Natural killer cell (primary cell): ENCODE measurements at regions of chr3 and their contacts with region 1.

Region 1: DNA sequence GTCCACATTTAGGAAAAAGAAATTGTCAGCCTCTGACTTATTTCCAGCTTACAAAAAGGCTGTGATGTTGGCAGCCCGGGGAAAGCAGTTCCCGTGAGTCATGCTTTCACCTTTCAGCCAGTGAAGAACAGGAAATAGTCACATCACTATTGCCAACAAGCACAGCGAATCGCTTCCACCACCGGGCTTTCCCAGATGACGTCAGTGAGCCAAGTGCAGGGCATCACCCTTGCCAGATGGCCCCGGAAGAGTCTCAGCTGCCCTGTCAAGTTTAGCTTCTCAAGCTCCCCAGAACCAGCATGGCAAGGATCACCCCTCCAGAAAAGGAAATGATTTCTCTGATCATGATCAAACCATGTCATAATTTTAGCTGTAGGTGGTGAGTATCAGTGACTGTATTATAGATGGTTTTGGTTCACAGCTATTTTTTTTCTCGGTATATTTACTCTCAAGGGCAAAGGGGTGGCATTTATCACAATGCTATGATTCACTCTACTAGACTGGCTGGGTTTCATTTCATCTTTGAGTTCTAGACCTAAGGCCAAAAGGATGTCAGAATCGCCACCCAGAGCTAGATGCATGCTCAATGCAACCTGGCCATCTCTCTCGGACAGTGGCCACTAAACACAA is 32.9 kb downstream of the B3GNT5 start:
- DNase-seq: peak; percentile 87 to 97
- ATAC-seq: peak; percentile 87 to 97 (median 93)
- H3K4me3 ChIP-seq: no peak overlapping the region
- H3K4me3 Mint-ChIP-seq: peak overlapping the region; percentile 80
- H3K27ac ChIP-seq: peak overlapping the region; percentile 90
- H3K27ac Mint-ChIP-seq: peak overlapping the region; percentile 97 to 98
- H3K4me1 ChIP-seq: peaks cover 12% of the 10 kb centered on the region
- H3K4me1 Mint-ChIP-seq: peaks cover 22 to 24% of the 10 kb centered on the region in 2 donors
- H3K27me3 ChIP-seq: no peaks in the 10 kb centered on the region
- H3K27me3 Mint-ChIP-seq: no peaks in the 10 kb centered on the region
- CTCF ChIP-seq: no peak

Region 2: DNA sequence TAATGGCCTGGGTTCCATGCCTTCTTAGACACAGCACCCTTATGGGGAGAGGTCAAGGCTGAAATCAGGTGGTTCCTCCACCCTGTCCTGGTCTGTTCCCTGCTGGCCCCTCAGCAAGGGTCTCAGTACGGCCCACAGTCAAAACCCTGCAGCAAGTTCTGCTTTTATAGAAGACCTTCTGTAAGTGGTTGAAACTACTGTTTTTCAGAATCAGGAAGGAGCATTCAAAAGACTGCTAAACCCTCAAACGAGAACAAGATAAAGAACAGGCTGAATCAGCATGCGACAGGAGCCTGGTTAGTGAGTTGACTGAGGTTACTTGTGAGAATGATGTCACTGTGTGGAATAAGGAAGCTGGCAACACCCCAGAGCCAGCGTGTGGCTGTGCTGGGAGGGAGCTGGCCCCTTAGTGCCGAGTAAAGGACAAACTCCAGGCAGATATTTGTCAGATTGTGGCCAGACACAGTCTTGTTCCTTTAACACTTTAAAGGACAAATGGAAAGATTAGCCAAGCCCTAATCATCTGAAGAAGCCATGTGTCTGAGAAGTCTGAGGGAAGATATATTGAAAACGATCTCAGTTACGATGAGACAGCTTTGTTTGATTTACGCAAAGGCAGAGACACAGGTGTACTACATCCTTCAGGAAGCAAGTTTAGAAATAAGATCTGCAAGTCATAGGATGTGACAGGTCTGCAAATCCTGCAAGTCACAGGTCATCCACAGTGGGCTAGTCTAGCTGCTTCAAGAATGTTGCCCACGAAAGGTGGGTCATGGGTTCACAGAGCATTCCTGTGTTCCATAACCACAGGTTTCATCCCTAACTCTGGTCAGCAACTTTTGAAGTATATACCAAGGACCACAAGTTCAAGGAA is 21.1 kb after region 1 on chr3:
- intact Hi-C with region 1: loop called (anchors 2 kb)
- DNase-seq: peak; percentile 23 to 41
- ATAC-seq: peak; percentile 93 to 96 (median 96)
- H3K4me3 ChIP-seq: no peak overlapping the region
- H3K4me3 Mint-ChIP-seq: no peak overlapping the region
- H3K27ac ChIP-seq: no peak overlapping the region
- H3K27ac Mint-ChIP-seq: peak overlapping the region; percentile 67 to 78
- H3K4me1 ChIP-seq: peaks cover 7% of the 10 kb centered on the region
- H3K4me1 Mint-ChIP-seq: peaks cover 18 to 19% of the 10 kb centered on the region in 2 donors
- H3K27me3 ChIP-seq: no peaks in the 10 kb centered on the region
- H3K27me3 Mint-ChIP-seq: peaks cover 0 to 5% of the 10 kb centered on the region in 2 donors
- CTCF ChIP-seq: no peak

Region 3: DNA sequence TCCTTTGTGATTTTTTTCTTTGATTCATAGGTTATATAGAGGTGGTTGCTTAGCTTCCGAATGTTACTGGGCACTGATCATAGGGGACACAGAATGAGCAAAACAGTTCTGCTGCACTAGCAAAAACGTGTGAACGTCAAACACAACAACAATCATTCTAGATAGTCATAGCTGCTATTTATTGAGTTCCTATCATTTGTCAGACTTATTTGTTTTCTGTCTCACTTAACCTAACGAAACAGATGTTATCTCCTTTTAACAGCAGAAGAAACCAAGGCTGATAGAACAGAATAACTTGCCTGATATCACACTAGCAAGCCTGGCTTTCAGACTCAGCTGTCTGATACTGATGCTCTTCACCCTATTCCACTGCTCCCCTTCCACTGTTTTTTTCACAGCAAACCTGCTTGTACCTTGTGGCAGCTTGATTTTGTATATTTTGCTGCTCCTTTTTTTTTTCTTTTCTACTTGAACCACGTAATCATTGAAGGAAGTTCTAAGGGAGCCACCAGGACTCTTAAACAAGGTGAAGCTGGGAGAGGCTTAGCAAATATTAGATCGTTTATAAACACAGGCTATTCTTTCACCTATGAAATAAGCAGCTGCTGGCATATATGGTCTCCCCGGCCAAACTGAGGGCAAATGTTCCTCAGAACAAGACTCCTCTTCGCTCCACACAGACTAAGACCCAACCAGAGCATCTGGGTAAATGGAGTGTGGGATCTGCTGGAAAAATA is 63.6 kb after region 1 on chr3:
- intact Hi-C with region 1: loop called (anchors 1 kb)
- DNase-seq: peak in 1 of 2 donors; percentile 56
- ATAC-seq: peak; percentile 69 to 72 (median 71)
- H3K4me3 ChIP-seq: no peak overlapping the region
- H3K4me3 Mint-ChIP-seq: peak overlapping the region; percentile 60
- H3K27ac ChIP-seq: peak overlapping the region; percentile 52
- H3K27ac Mint-ChIP-seq: peak overlapping the region; percentile 67 to 90
- H3K4me1 ChIP-seq: peaks cover 11% of the 10 kb centered on the region
- H3K4me1 Mint-ChIP-seq: peaks cover 25 to 33% of the 10 kb centered on the region in 2 donors
- H3K27me3 ChIP-seq: no peaks in the 10 kb centered on the region
- H3K27me3 Mint-ChIP-seq: peaks cover 9 to 17% of the 10 kb centered on the region in 2 donors
- CTCF ChIP-seq: no peak

Region 4: DNA sequence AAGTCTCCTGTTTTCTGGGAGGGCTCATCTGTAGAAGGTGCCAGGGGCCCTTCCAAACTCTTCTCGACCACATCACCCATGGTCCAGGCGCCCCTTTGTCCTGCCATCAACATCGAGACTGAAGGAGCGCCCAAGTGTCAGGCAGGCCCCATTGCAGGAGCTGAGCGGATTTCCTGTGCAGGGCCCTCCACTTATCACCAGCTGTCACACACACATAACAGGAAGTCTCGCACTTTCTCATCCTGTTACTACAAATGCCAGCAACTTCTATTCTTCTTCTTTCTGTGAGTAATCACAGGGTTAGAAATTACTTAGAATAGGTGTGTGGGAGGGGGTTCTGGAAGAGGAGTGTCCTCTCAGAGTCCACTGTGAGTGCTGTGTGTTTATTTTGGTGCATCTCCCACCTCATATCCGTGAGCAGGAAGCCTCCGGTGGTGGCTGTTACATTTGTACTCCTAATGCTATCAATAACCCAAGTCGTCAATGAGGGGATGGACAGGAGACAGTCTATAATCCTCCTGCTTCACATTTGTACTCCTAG is 269.7 kb after region 1 on chr3 and contains the start of gene KLHL6:
- intact Hi-C with region 1: loop called (anchors 10 kb)
- DNase-seq: peak; percentile 69 to 86
- ATAC-seq: peak; percentile 89 to 96 (median 96)
- H3K4me3 ChIP-seq: peak within 1 kb of the TSS; percentile 57
- H3K4me3 Mint-ChIP-seq: peak within 1 kb of the TSS; percentile 98
- H3K27ac ChIP-seq: peak within 1 kb of the TSS; percentile 80
- H3K27ac Mint-ChIP-seq: peak within 1 kb of the TSS; percentile 97 to 99
- H3K4me1 ChIP-seq: peaks cover 36% of the 10 kb centered on the region
- H3K4me1 Mint-ChIP-seq: peaks cover 47 to 52% of the 10 kb centered on the region in 2 donors
- H3K27me3 ChIP-seq: no peaks in the 10 kb centered on the region
- H3K27me3 Mint-ChIP-seq: no peaks in the 10 kb centered on the region
- CTCF ChIP-seq: no peak
- total RNA-seq, gene KLHL6: 10.9 to 17.3 (median 13.6) TPM

Region 5: GRCh38 chr3:184129012-184129411 is 843.1 kb after region 1 on chr3:
- intact Hi-C with region 1: no loop called
- DNase-seq: peak in 1 of 2 donors; percentile 17
- ATAC-seq: peak in 1 of 3 donors; percentile 52
- H3K4me3 ChIP-seq: no peak overlapping the region
- H3K4me3 Mint-ChIP-seq: no peak overlapping the region
- H3K27ac ChIP-seq: no peak overlapping the region
- H3K27ac Mint-ChIP-seq: no peak overlapping the region
- H3K4me1 ChIP-seq: peaks cover 3% of the 10 kb centered on the region
- H3K4me1 Mint-ChIP-seq: peaks cover 7 to 8% of the 10 kb centered on the region in 2 donors
- H3K27me3 ChIP-seq: no peaks in the 10 kb centered on the region
- H3K27me3 Mint-ChIP-seq: peaks cover 0 to 6% of the 10 kb centered on the region in 2 donors
- CTCF ChIP-seq: peak; percentile 7